Ovary (tissue), 10 donors: ENCODE measurements at regions of chr2 and their contacts with region 1.

Region 1: GRCh38 chr2:55718165-55719008 is 24.7 kb upstream of the PNPT1 start:
- DNase-seq: peak in 4 of 5 donors; percentile 19 to 60 (median 40)
- H3K4me3 ChIP-seq: no peak overlapping the region
- H3K27ac ChIP-seq: no peak overlapping the region
- H3K4me1 ChIP-seq: no peaks in the 10 kb centered on the region
- H3K27me3 ChIP-seq: no peaks in the 10 kb centered on the region
- CTCF ChIP-seq: peak; percentile 20 to 84 (median 71)
- EP300 ChIP-seq: no peak
- POLR2A ChIP-seq: no peak

Region 2: DNA sequence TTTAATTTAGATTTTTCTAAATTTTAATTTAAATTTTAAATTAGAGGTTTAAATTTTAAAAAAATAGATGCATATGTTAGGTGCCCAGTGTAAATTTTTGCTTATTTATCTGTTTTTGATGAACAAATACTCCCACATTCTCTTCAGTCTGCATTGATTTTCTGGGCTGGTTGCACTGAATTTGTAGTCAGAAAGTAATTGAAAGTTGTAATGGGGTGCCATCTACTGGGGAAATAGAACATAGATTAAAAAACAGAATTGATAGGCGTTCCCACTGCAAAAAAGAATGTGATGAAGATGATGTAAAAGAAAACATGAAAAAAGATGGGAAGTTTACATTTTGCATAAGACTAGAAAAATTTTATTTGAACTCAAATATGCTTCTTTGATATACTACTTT is 413.8 kb after region 1 on chr2:
- intact Hi-C with region 1: loop called in 3 of 4 experiments (anchors 5 to 10 kb)
- DNase-seq: no peak
- H3K4me3 ChIP-seq: no peak overlapping the region
- H3K27ac ChIP-seq: no peak overlapping the region
- H3K4me1 ChIP-seq: no peaks in the 10 kb centered on the region
- H3K27me3 ChIP-seq: no peaks in the 10 kb centered on the region
- CTCF ChIP-seq: no peak
- EP300 ChIP-seq: no peak
- POLR2A ChIP-seq: no peak

Region 3: DNA sequence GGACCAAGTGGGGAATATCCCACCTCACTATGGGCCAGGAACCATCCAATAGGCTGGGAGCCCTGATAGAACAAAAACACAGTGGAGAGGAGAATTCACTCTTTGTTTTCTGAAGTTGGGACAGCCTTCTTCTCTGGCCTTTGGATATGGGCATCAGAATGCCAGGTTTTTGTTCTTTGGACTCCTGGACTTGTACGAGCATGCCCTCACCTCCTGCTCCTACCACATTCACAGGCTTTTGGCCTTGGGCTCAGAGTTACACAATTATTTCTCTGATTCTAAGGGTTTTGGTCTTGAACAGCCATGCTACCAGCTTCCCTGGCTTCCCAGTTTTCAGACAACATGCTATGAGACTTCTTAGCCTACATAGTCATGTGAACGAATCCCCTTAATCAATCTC is 1595.3 kb after region 1 on chr2:
- intact Hi-C with region 1: no loop called
- DNase-seq: no peak
- H3K4me3 ChIP-seq: no peak overlapping the region
- H3K27ac ChIP-seq: no peak overlapping the region
- H3K4me1 ChIP-seq: no peaks in the 10 kb centered on the region
- H3K27me3 ChIP-seq: no peaks in the 10 kb centered on the region
- CTCF ChIP-seq: no peak
- EP300 ChIP-seq: no peak
- POLR2A ChIP-seq: no peak